Right cardiac atrium (tissue), 5 donors: ENCODE measurements at regions of chr18 and their contacts with region 1.

Region 1: GRCh38 chr18:54109131-54109683 is 115.3 kb downstream of the MBD2 start:
- DNase-seq: no peak
- ATAC-seq: no peak
- H3K4me3 ChIP-seq: no peak overlapping the region
- H3K27ac ChIP-seq: no peak overlapping the region
- H3K4me1 ChIP-seq: no peaks in the 10 kb centered on the region
- H3K27me3 ChIP-seq: no peaks in the 10 kb centered on the region

Region 2: GRCh38 chr18:53567929-53568574 is 541.2 kb before region 1 on chr18:
- intact Hi-C with region 1: loop called in 1 of 4 experiments (anchors 10 kb)
- DNase-seq: peak in 1 of 3 donors; percentile 22
- ATAC-seq: no peak
- H3K4me3 ChIP-seq: no peak overlapping the region
- H3K27ac ChIP-seq: no peak overlapping the region
- H3K4me1 ChIP-seq: no peaks in the 10 kb centered on the region
- H3K27me3 ChIP-seq: no peaks in the 10 kb centered on the region